ENCODE measurements at regions of chr11 and their contacts with region 1.

Region 1: GRCh38 chr11:116871248-116871647 is 33.8 kb upstream of the APOA1 start:
- DNase-seq: no peak
- H3K4me3 ChIP-seq: no peak overlapping the region
- H3K4me3 Mint-ChIP-seq: no peak overlapping the region
- H3K27ac Mint-ChIP-seq: no peak overlapping the region
- H3K4me1 ChIP-seq: peaks cover 30% of the 10 kb centered on the region
- H3K4me1 Mint-ChIP-seq: peaks cover 24% of the 10 kb centered on the region
- H3K27me3 ChIP-seq: no peaks in the 10 kb centered on the region
- H3K27me3 Mint-ChIP-seq: no peaks in the 10 kb centered on the region
- CTCF ChIP-seq: no peak

Region 2: GRCh38 chr11:115860261-115860660 is 1011.0 kb before region 1 on chr11:
- CTCF ChIA-PET with region 1: no interaction called
- POLR2A ChIA-PET with region 1: no interaction called
- intact Hi-C with region 1: loop called (anchors 5 kb)
- DNase-seq: no peak
- H3K4me3 ChIP-seq: no peak overlapping the region
- H3K4me3 Mint-ChIP-seq: no peak overlapping the region
- H3K27ac Mint-ChIP-seq: no peak overlapping the region
- H3K4me1 ChIP-seq: no peaks in the 10 kb centered on the region
- H3K4me1 Mint-ChIP-seq: no peaks in the 10 kb centered on the region
- H3K27me3 ChIP-seq: no peaks in the 10 kb centered on the region; the same call in 1 of the 2 replicates
- H3K27me3 Mint-ChIP-seq: peaks cover 11% of the 10 kb centered on the region
- CTCF ChIP-seq: no peak

Region 3: DNA sequence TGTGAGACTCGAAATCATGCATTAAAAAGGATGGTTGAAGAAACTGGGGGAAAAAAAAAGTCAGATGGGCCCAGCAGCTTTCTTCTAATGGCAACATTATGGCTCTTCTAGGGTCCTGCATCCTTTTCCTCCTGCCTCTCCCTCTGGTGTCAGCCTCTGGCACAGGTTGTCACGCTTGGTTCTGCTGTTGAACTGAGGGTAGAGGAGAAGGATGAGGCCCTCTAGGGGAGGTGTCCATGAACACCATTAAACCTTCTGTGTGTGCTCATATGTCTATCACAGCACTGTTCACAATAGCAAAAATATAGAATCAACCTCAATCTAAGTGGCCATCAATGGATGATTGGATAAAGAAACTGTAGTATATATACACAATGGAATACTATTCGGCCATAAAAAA is 134.5 kb before region 1 on chr11:
- CTCF ChIA-PET with region 1: no interaction called
- POLR2A ChIA-PET with region 1: no interaction called
- intact Hi-C with region 1: no loop called
- DNase-seq: peak; percentile 76 to 78
- H3K4me3 ChIP-seq: no peak overlapping the region
- H3K4me3 Mint-ChIP-seq: no peak overlapping the region
- H3K27ac Mint-ChIP-seq: no peak overlapping the region
- H3K4me1 ChIP-seq: peaks cover 9% of the 10 kb centered on the region
- H3K4me1 Mint-ChIP-seq: peaks cover 15% of the 10 kb centered on the region
- H3K27me3 ChIP-seq: no peaks in the 10 kb centered on the region
- H3K27me3 Mint-ChIP-seq: no peaks in the 10 kb centered on the region
- CTCF ChIP-seq: peak; percentile 74 to 84

Measured in Caco-2 (cell line).